ENCODE measurements at regions of chr12 and their contacts with region 1.

Region 1: DNA sequence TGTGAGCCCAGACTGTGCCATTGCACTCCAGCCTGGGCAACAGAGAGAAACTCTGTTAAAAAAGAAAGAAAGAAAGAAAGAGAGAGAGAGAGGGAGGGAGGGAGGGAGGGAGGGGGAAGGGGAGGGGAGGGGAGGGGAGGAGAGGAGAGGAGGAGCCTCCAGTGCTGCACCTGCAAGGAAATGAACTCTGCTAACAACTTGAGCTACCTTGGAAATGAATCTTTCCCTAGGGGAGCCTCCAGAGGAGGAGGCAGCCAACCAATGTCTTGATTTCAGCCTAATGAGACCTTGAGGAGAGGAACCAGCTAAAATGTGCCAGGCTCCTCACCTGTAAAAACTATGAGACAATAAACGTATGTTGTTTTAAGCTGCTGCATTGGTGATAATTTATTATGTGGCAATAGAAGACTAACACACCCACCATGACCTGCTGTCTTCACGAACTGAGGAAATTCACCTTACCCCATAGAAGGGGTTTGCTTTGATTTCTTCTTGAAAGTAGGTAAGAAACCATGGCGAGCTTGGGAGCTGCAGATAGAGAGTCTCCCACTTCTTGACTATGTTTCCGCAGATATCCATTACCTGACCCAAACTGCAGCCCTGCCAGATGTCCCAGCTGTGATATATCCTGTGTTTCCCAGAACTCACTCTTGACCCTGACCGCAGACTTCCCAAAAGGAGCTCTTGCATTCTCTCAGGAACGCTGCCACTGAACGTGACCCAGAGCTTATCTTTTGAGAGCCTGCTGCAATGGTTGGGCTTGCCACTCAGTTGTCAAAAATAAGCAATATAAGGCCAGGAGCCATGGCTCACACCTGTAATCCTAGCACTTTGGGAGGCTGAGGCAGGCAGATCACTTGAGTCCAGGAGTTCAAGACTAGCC is 31.5 kb upstream of the TMPO start:
- DNase-seq: no peak
- ATAC-seq: no peak
- H3K4me3 ChIP-seq: no peak overlapping the region
- H3K27ac ChIP-seq: no peak overlapping the region
- H3K4me1 ChIP-seq: no peaks in the 10 kb centered on the region
- H3K27me3 ChIP-seq: no peaks in the 10 kb centered on the region

Region 2: DNA sequence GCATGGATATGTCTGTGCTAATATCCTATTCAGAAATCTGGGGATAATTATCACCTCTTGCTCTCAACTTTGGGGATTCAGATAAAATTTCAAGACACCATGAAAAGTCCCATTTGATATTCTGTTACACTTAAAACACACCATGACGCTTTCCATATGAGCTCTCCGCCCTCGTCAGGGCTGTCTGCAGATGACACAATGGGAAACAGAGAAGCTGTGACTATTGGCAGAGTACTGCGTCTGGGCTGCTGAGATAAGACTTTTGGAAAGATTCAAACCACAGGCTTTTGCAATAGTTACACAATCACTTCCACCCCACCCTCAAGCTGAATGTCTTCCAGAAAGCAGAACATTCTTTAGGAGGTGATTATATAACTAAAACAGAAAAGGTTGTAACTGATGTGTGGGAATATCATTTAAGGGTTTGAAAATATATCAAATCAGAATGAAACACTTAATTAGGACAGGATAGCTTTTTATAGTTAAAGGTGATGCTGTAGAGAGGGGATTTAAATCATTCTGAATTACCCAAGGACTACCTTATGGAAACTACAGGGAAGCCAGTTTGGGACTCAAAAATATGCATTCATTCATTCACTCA is 43.8 kb before region 1 on chr12:
- intact Hi-C with region 1: loop called in 1 of 2 experiments (anchors 10 kb)
- DNase-seq: peak in 1 of 2 donors; percentile 84
- ATAC-seq: peak; percentile 94
- H3K4me3 ChIP-seq: no peak overlapping the region
- H3K27ac ChIP-seq: no peak overlapping the region
- H3K4me1 ChIP-seq: no peaks in the 10 kb centered on the region
- H3K27me3 ChIP-seq: no peaks in the 10 kb centered on the region

Region 3: GRCh38 chr12:98582093-98582492 is 98.2 kb after region 1 on chr12:
- intact Hi-C with region 1: no loop called
- DNase-seq: no peak
- ATAC-seq: no peak
- H3K4me3 ChIP-seq: no peak overlapping the region
- H3K27ac ChIP-seq: no peak overlapping the region
- H3K4me1 ChIP-seq: no peaks in the 10 kb centered on the region
- H3K27me3 ChIP-seq: no peaks in the 10 kb centered on the region